Ascending aorta (tissue), 2 donors: ENCODE measurements at regions of chr20 and their contacts with region 1.

Region 1: GRCh38 chr20:13105864-13106457 is 97.2 kb downstream of the SPTLC3 start:
- DNase-seq: no peak
- H3K4me3 ChIP-seq: no peak overlapping the region
- H3K27ac ChIP-seq: no peak overlapping the region
- H3K4me1 ChIP-seq: no peaks in the 10 kb centered on the region
- H3K27me3 ChIP-seq: no peaks in the 10 kb centered on the region
- CTCF ChIP-seq: peak in 2 of 3 experiments; percentile 57 to 76

Region 2: GRCh38 chr20:12660918-12661317 is 445.0 kb before region 1 on chr20:
- intact Hi-C with region 1: loop called (anchors 5 kb)
- DNase-seq: peak in 1 of 2 donors; percentile 68
- H3K4me3 ChIP-seq: no peak overlapping the region
- H3K27ac ChIP-seq: peak overlapping the region in 1 of 2 donors; percentile 22
- H3K4me1 ChIP-seq: no peaks in the 10 kb centered on the region
- H3K27me3 ChIP-seq: no peaks in the 10 kb centered on the region
- CTCF ChIP-seq: peak; percentile 6 to 48 (median 41)

Region 3: GRCh38 chr20:12925214-12925755 is 180.7 kb before region 1 on chr20:
- intact Hi-C with region 1: loop called (anchors 1 kb)
- DNase-seq: no peak
- H3K4me3 ChIP-seq: peak overlapping the region in 1 of 2 donors; percentile 11
- H3K27ac ChIP-seq: no peak overlapping the region
- H3K4me1 ChIP-seq: peaks cover 3 to 5% of the 10 kb centered on the region in 2 donors
- H3K27me3 ChIP-seq: no peaks in the 10 kb centered on the region
- CTCF ChIP-seq: peak; percentile 72 to 84 (median 81)

Region 4: DNA sequence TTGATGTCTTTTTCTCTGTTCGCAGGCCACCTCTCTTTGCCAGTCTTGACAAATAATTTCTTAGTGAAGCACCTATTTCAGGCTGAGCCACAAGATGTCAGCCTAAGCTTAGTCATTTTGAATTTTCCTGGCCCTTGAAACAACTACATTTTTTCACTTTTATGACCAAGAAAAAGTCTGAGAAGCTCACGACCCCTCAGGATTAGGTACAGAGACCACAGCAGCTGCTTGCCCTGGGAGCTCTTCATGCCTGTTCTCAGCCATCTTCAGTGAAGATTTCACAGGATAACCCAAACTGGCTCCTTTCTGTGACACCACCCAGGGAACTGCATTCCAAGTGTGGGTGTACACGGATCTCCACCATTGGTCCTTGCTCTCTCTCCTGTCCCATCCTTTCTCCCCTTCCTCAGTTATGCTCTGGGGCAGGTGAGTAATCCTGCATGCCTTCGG is 135.6 kb before region 1 on chr20:
- intact Hi-C with region 1: loop called (anchors 1 kb)
- DNase-seq: no peak
- H3K4me3 ChIP-seq: no peak overlapping the region
- H3K27ac ChIP-seq: no peak overlapping the region
- H3K4me1 ChIP-seq: no peaks in the 10 kb centered on the region
- H3K27me3 ChIP-seq: no peaks in the 10 kb centered on the region
- CTCF ChIP-seq: peak; percentile 45 to 62 (median 49)

Region 5: DNA sequence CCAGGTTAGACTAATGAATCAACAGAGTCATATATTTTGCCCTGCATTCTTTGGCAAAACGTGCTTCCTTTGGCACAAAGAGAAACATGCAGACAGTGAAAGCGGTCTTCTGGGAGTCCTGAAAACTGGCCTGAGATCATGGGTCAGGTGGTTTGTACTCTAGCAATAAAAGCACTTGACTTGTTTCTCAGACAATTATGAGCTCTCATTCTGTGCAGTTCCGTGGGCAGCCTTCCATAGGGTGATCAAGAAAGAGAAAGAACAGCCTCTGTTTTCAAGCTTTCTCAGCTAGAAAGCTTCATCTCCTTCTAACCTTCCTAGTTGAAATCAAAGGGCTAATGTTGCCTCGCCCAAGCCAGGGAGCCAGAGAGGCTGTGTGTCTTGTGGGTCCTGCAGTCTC is 52.4 kb after region 1 on chr20:
- intact Hi-C with region 1: no loop called
- DNase-seq: no peak
- H3K4me3 ChIP-seq: peak overlapping the region in 1 of 2 donors; percentile 28
- H3K27ac ChIP-seq: peak overlapping the region; percentile 31 to 65
- H3K4me1 ChIP-seq: peaks cover 0 to 3% of the 10 kb centered on the region in 2 donors
- H3K27me3 ChIP-seq: no peaks in the 10 kb centered on the region
- CTCF ChIP-seq: no peak

Region 6: GRCh38 chr20:13348311-13349234 is 242.6 kb after region 1 on chr20:
- intact Hi-C with region 1: no loop called
- DNase-seq: no peak
- H3K4me3 ChIP-seq: peak overlapping the region in 1 of 2 donors; percentile 11
- H3K27ac ChIP-seq: peak overlapping the region in 1 of 2 donors; percentile 49
- H3K4me1 ChIP-seq: peaks cover 0 to 3% of the 10 kb centered on the region in 2 donors
- H3K27me3 ChIP-seq: no peaks in the 10 kb centered on the region
- CTCF ChIP-seq: no peak